ENCODE measurements at regions of chr9 and their contacts with region 1.

Region 1: GRCh38 chr9:108412755-108413154 is 443.0 kb downstream of the ACTL7B start:
- DNase-seq: peak; percentile 30
- H3K4me3 ChIP-seq: no peak overlapping the region
- H3K27ac ChIP-seq: no peak overlapping the region
- H3K4me1 ChIP-seq: no peaks in the 10 kb centered on the region
- H3K27me3 ChIP-seq: no peaks in the 10 kb centered on the region
- CTCF ChIP-seq: no peak

Region 2: GRCh38 chr9:108282872-108283271 is 129.9 kb before region 1 on chr9:
- intact Hi-C with region 1: loop called (anchors 10 kb)
- DNase-seq: no peak
- H3K4me3 ChIP-seq: no peak overlapping the region
- H3K27ac ChIP-seq: no peak overlapping the region
- H3K4me1 ChIP-seq: no peaks in the 10 kb centered on the region
- H3K27me3 ChIP-seq: no peaks in the 10 kb centered on the region
- CTCF ChIP-seq: peak; percentile 18

Region 3: DNA sequence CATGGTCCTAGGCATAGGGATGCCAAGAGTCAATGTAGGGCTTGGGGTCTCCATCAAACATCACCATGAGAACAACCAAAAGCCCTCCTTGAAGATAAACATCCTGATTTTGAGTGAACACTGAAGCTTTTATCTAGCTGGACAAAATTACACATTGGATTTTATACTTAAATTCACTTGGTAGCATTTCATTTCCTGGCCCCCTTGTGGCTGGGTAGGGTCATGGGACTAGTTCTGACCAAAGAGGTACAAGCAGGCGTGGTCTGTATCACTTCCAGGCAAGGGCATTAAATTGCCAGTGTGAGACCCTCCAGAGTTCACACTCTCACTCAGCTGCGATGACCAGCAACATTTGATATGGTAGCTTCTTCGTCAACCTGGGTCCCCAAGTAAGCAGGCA is 122.8 kb after region 1 on chr9:
- intact Hi-C with region 1: loop called (anchors 10 kb)
- DNase-seq: peak; percentile 36
- H3K4me3 ChIP-seq: no peak overlapping the region
- H3K27ac ChIP-seq: no peak overlapping the region
- H3K4me1 ChIP-seq: no peaks in the 10 kb centered on the region
- H3K27me3 ChIP-seq: no peaks in the 10 kb centered on the region
- CTCF ChIP-seq: peak; percentile 26

Region 4: DNA sequence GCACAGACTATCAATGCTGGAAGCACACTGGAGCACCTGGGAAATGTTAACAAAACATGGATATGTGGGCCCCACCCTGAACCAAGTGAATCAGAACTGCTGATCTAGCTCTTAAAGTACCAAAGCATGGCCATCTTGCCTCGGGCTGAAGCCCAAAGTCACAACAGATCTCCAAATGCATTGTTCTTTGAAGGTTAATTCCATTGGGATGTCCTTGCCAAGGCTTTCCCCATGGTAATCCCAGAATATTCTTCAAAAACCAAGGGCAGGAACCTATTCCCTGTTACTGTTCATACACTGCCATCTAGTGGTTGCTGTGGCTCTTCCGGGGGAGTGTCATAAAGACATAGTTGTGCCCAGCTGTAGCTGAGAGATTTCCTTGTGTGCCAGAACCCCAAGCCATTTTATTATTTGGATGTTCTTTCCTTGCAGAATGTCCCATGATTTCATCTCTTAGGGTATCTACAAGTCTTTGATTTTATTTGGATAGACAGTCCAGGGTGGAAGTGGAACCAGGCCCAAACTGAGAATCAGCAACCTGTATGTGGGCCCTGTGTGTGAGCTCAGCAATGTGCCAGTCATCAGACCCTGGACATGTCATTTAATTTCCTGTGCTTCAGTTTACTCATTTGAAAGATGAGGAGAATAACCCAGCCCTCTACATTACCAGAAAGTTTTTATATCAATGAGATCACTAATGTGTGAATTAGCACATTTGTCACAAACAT is 153.1 kb after region 1 on chr9:
- intact Hi-C with region 1: loop called (anchors 10 kb)
- DNase-seq: peak; percentile 67
- H3K4me3 ChIP-seq: no peak overlapping the region
- H3K27ac ChIP-seq: no peak overlapping the region
- H3K4me1 ChIP-seq: no peaks in the 10 kb centered on the region
- H3K27me3 ChIP-seq: no peaks in the 10 kb centered on the region
- CTCF ChIP-seq: peak; percentile 87

Region 5: GRCh38 chr9:108761655-108762347 is 349.0 kb after region 1 on chr9:
- intact Hi-C with region 1: loop called (anchors 10 kb)
- DNase-seq: peak; percentile 65
- H3K4me3 ChIP-seq: no peak overlapping the region
- H3K27ac ChIP-seq: no peak overlapping the region
- H3K4me1 ChIP-seq: no peaks in the 10 kb centered on the region
- H3K27me3 ChIP-seq: no peaks in the 10 kb centered on the region
- CTCF ChIP-seq: peak; percentile 88